Heart right ventricle (tissue), 16 donors: ENCODE measurements at regions of chr12 and their contacts with region 1.

Region 1: GRCh38 chr12:76920172-76921014 is 41.6 kb upstream of the CSRP2 start:
- DNase-seq: no peak
- ATAC-seq: no peak
- H3K4me3 ChIP-seq: no peak overlapping the region
- H3K27ac ChIP-seq: no peak overlapping the region
- H3K4me1 ChIP-seq: peaks cover 0 to 10% (median 3%) of the 10 kb centered on the region in 9 donors
- H3K27me3 ChIP-seq: no peaks in the 10 kb centered on the region
- CTCF ChIP-seq: no peak

Region 2: GRCh38 chr12:76878899-76879709 is 41.3 kb before region 1 on chr12 and contains the start of gene CSRP2:
- intact Hi-C with region 1: loop called in 1 of 10 experiments (anchors 5 kb)
- DNase-seq: peak; percentile 88 to 92
- ATAC-seq: peak; percentile 95 to 98 (median 96)
- H3K4me3 ChIP-seq: peak within 1 kb of the TSS; percentile 62 to 89 (median 78)
- H3K27ac ChIP-seq: peak within 1 kb of the TSS; percentile 83 to 96 (median 92)
- H3K4me1 ChIP-seq: peaks cover 0 to 40% (median 22%) of the 10 kb centered on the region in 9 donors
- H3K27me3 ChIP-seq: peaks cover 0 to 40% (median 0%) of the 10 kb centered on the region in 7 donors
- CTCF ChIP-seq: peak in 5 of 9 donors; percentile 17 to 44 (median 29)
- total RNA-seq, gene CSRP2: 9.7 to 43.5 (median 19.7) TPM